ENCODE measurements at regions of chr20 and their contacts with region 1.

Region 1: GRCh38 chr20:45095753-45096371 is 5.1 kb downstream of the KCNS1 start:
- DNase-seq: peak; percentile 41
- ATAC-seq: peak; percentile 85
- H3K4me3 ChIP-seq: no peak overlapping the region
- H3K27ac ChIP-seq: no peak overlapping the region
- H3K4me1 ChIP-seq: no peaks in the 10 kb centered on the region
- H3K27me3 ChIP-seq: no peaks in the 10 kb centered on the region
- CTCF ChIP-seq: peak; percentile 68 to 81 (median 74)
- POLR2A ChIP-seq: no peak
- RAD21 ChIP-seq: peak; percentile 83

Region 2: GRCh38 chr20:44785769-44786168 is 310.1 kb before region 1 on chr20:
- CTCF ChIA-PET with region 1: interaction called, 10 read pairs
- POLR2A ChIA-PET with region 1: no interaction called
- RAD21 ChIA-PET with region 1: no interaction called
- intact Hi-C with region 1: no loop called
- DNase-seq: no peak
- ATAC-seq: peak; percentile 69
- H3K4me3 ChIP-seq: no peak overlapping the region
- H3K27ac ChIP-seq: no peak overlapping the region
- H3K4me1 ChIP-seq: no peaks in the 10 kb centered on the region
- H3K27me3 ChIP-seq: peaks cover 51% of the 10 kb centered on the region
- CTCF ChIP-seq: peak in 2 of 3 experiments; percentile 7 to 29; a peak in 1 of 6 replicates
- POLR2A ChIP-seq: no peak
- RAD21 ChIP-seq: peak; percentile 46

Region 3: DNA sequence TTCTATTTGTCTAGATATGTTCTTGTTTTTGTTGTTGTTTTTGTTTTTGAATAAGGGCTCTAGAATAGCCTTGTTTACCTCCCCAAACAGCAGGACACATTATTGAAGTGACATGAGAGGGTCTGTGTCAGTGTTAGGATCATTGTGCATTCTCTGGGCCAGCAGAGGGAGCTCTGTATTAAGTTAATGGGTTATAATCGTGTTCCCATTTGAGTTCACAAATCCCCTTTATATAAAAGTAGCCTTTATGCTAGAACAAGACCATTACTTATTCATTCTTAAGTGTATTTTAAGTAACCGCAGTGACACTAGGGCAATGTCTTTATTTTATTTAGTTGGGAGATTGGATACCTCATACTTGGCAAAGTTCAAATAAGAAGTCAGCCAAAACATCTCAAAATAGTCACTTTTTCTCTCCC is 84.7 kb before region 1 on chr20:
- CTCF ChIA-PET with region 1: interaction called, 22 read pairs
- POLR2A ChIA-PET with region 1: interaction called, 3 read pairs
- RAD21 ChIA-PET with region 1: interaction called in 1 of 2 experiments, 4 read pairs
- intact Hi-C with region 1: loop called (anchors 1 kb)
- DNase-seq: peak; percentile 36
- ATAC-seq: peak; percentile 81
- H3K4me3 ChIP-seq: no peak overlapping the region
- H3K27ac ChIP-seq: no peak overlapping the region
- H3K4me1 ChIP-seq: peaks cover 13 to 19% of the 10 kb centered on the region in 2 experiments
- H3K27me3 ChIP-seq: no peaks in the 10 kb centered on the region
- CTCF ChIP-seq: peak; percentile 68 to 88 (median 74); a peak in 5 of 6 replicates
- POLR2A ChIP-seq: no peak
- RAD21 ChIP-seq: peak; percentile 80

Region 4: DNA sequence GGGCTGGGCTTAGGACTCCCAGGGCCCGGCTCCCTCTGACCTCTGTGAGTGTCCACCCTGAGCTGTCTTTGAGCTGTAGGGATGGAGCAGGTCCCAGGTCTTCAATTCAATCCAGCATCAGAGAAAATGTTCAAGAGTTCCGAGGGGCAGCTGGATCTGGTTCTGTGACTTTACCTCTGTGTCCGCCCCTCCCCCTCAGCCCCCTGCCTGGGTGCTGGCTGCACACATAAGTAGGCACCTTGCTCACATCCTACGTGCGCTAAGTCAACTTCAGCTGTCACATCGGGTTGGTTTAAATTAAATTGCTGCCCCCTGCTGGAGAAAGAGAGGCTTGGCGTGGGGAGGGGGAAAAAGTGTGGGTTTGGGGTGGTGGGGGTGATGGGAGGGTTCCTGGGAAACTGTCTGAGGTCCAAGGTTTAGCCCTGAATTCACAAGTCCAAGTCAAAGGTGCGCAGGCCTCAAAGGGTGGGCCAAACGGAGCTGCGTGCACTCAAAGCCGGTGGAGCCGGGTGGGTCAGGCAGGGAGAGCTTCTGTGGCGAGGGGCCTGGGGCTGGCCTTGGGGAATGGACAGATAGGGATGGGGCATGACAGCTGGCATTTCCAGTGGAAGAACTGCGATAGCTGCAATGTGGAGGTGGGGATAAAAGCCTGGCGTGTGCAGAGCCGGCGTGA is 16.1 kb after region 1 on chr20:
- CTCF ChIA-PET with region 1: interaction called, 27 read pairs
- POLR2A ChIA-PET with region 1: no interaction called
- RAD21 ChIA-PET with region 1: no interaction called
- intact Hi-C with region 1: no loop called
- DNase-seq: no peak
- ATAC-seq: peak; percentile 79
- H3K4me3 ChIP-seq: no peak overlapping the region
- H3K27ac ChIP-seq: no peak overlapping the region
- H3K4me1 ChIP-seq: 0 out of 4 replicates have a peak, but pooled peaks cover 0 to 3% of the 10 kb centered on the region in 2 experiments
- H3K27me3 ChIP-seq: no peaks in the 10 kb centered on the region; the same call in 1 of the 2 replicates
- CTCF ChIP-seq: peak; percentile 42 to 80 (median 45); a peak in 5 of 6 replicates
- POLR2A ChIP-seq: no peak
- RAD21 ChIP-seq: peak; percentile 56; the same call in 1 of the 2 replicates

Region 5: DNA sequence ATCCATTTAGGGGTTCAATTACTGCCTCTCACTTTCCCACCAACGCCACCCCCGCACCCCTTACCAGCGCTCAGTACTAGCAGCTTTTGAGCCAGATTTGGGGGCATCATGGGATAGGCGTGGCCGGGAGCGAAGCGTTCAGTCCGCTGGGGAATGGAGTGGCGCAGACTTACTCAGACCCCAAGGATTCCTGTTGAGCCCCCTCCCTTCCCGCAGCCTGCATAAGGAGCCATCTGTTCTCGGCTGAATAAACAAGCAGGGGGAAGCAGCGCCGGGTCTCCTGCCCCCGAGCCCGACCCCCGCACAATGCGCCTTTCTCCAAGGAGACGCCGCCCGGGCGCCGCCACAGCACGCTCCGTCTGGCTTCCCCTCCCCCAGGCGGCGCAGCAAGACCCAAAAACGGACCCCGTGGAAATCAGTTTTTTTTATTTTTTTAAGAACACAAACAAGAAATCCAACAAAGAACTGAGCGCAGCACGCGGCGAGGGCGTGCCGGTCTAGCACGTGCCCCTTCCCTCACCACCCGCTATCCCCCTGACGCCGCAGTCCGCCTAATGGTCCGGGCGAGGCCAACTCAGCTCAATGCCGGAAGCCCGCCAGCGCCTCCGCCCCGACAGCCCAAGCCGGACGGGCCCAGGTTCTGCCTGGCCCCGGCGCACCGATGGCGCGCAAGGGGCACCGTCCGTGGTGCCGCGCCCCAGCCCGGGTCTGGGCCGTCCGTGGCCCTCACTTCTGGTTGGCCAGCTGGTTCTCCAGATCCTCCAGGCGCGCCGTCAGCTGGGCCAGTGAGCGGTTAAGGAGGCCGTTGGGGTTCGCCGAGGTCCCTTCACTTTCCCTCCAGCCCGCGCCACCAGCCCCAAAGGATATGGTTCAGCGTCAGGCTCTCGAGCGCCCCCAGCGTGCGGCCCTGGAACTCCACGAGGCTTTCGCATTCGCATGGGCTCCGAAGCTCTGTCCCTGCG is 197.5 kb after region 1 on chr20:
- CTCF ChIA-PET with region 1: interaction called, 13 read pairs
- POLR2A ChIA-PET with region 1: no interaction called
- RAD21 ChIA-PET with region 1: no interaction called
- intact Hi-C with region 1: no loop called
- DNase-seq: peak; percentile 26
- ATAC-seq: peak; percentile 91
- H3K4me3 ChIP-seq: peak overlapping the region; percentile 32 to 59
- H3K27ac ChIP-seq: peak overlapping the region; percentile 23; the same call in 1 of the 2 replicates
- H3K4me1 ChIP-seq: peaks cover 0 to 12% of the 10 kb centered on the region in 2 experiments; a peak in 2 of 4 replicates
- H3K27me3 ChIP-seq: no peaks in the 10 kb centered on the region
- CTCF ChIP-seq: peak; percentile 40 to 97 (median 94); a peak in 5 of 6 replicates
- POLR2A ChIP-seq: no peak
- RAD21 ChIP-seq: no peak